Right ventricle myocardium inferior (tissue), 1 donor: ENCODE measurements at regions of chr1 and their contacts with region 1.

Region 1: GRCh38 chr1:70528590-70529333 is 117.7 kb downstream of the CTH start:
- DNase-seq: no peak
- ATAC-seq: no peak

Region 2: GRCh38 chr1:70112838-70113237 is 415.9 kb before region 1 on chr1:
- intact Hi-C with region 1: no loop called
- DNase-seq: no peak
- ATAC-seq: no peak

Region 3: DNA sequence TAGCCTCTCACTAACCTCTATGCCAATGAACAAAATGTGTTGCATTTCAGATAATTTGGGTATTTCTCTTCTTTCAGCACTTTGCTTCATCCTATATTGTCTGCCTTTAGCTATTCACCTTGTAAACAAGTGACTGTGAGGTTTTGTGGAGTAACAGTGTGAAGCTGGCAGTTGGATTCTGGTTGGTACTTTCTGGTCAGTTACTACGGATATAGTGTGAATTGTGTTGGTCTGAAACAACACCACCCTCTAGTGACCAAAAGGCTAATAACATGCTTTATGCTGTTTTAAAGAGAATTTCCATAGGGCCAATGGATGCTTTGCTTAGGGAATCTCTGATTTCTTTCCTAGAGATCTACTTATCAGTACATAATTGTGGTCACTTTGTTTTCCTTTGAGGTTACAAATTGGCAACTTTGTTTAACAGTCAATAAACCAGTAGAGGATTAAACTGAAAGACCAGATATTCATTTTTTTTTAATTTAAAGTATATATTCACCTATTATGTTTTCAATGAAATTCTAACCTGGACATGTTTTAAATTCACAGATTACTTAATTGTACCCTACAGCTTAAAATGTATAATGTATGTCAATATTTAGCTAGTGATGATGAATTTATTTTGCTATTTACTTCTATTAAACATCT is 521.3 kb after region 1 on chr1:
- intact Hi-C with region 1: loop called (anchors 2 kb)
- DNase-seq: no peak
- ATAC-seq: peak; percentile 49